CD8-positive, alpha-beta T cell (primary cell): ENCODE measurements at regions of chr6 and their contacts with region 1.

Region 1: DNA sequence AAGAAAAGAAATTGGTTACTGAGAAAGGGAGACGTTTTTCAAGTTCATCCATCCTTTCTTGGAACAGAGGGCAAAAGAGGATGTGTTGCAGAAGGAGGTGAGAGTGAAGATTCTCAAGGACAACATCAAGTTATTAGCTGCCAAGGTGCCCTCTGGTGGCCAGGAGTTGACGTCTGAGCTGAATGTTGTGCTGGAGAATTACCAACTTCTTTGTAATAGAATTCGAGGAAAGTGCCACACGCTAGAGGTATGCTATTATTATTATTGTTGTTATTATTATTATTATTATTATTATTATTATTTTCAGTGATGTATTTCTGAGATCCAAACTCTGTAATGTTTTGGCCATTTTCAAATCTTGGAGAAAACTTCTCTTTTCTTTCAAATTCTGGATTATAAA is 197.0 kb downstream of the UTRN start:
- DNase-seq: peak; percentile 49 to 80 (median 75)
- ATAC-seq: peak; percentile 77
- H3K4me3 ChIP-seq: no peak overlapping the region
- H3K4me3 Mint-ChIP-seq: no peak overlapping the region
- H3K27ac ChIP-seq: no peak overlapping the region
- H3K27ac Mint-ChIP-seq: no peak overlapping the region
- H3K4me1 ChIP-seq: no peaks in the 10 kb centered on the region
- H3K4me1 Mint-ChIP-seq: peaks cover 3% of the 10 kb centered on the region
- H3K27me3 ChIP-seq: no peaks in the 10 kb centered on the region
- H3K27me3 Mint-ChIP-seq: no peaks in the 10 kb centered on the region
- CTCF ChIP-seq: peak; percentile 80

Region 2: DNA sequence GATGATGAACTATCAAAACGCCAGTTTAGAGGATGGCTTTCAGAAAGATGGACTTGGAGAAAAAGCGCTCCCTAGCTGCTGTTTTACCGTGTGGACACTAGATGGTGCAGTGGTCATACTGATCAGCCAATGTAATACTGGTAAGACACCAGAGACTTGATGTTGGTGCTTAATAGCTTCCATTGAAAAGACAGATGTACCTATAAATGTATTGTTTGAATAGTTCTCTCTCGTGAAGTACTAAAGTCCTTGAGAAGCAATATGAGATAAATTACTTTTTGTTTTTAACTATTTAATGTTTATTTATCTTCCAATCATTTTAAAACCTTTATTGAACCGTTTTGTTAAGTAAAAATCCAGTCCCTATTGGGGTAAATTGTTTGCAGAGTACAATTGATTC is 906.7 kb before region 1 on chr6:
- CTCF ChIA-PET with region 1: interaction called, 3 read pairs
- POLR2A ChIA-PET with region 1: no interaction called
- intact Hi-C with region 1: loop called (anchors 2 kb)
- DNase-seq: peak; percentile 12 to 81 (median 46)
- ATAC-seq: peak; percentile 99
- H3K4me3 ChIP-seq: no peak overlapping the region
- H3K4me3 Mint-ChIP-seq: no peak overlapping the region
- H3K27ac ChIP-seq: no peak overlapping the region
- H3K27ac Mint-ChIP-seq: no peak overlapping the region
- H3K4me1 ChIP-seq: no peaks in the 10 kb centered on the region
- H3K4me1 Mint-ChIP-seq: no peaks in the 10 kb centered on the region
- H3K27me3 ChIP-seq: no peaks in the 10 kb centered on the region
- H3K27me3 Mint-ChIP-seq: no peaks in the 10 kb centered on the region
- CTCF ChIP-seq: peak; percentile 93

Region 3: GRCh38 chr6:144149891-144150709 is 332.0 kb before region 1 on chr6 and contains the start of gene STX11:
- CTCF ChIA-PET with region 1: no interaction called
- POLR2A ChIA-PET with region 1: no interaction called
- intact Hi-C with region 1: loop called in 1 of 2 experiments (anchors 2 kb)
- DNase-seq: peak; percentile 27 to 89 (median 67)
- ATAC-seq: peak; percentile 56
- H3K4me3 ChIP-seq: peak within 1 kb of the TSS; percentile 68 to 71
- H3K4me3 Mint-ChIP-seq: peak within 1 kb of the TSS; percentile 94
- H3K27ac ChIP-seq: peak within 1 kb of the TSS; percentile 66 to 90
- H3K27ac Mint-ChIP-seq: peak within 1 kb of the TSS; percentile 95
- H3K4me1 ChIP-seq: peaks cover 5% of the 10 kb centered on the region
- H3K4me1 Mint-ChIP-seq: peaks cover 19% of the 10 kb centered on the region
- H3K27me3 ChIP-seq: no peaks in the 10 kb centered on the region
- H3K27me3 Mint-ChIP-seq: no peaks in the 10 kb centered on the region
- CTCF ChIP-seq: no peak
- total RNA-seq, gene STX11: 17.7 to 18.9 TPM

Region 4: GRCh38 chr6:144334131-144334708 is 147.9 kb before region 1 on chr6:
- CTCF ChIA-PET with region 1: interaction called, 3 read pairs
- POLR2A ChIA-PET with region 1: no interaction called
- intact Hi-C with region 1: loop called in 1 of 2 experiments (anchors 5 kb)
- DNase-seq: peak; percentile 42 to 94 (median 78)
- ATAC-seq: peak; percentile 93
- H3K4me3 ChIP-seq: peak overlapping the region; percentile 51 to 52
- H3K4me3 Mint-ChIP-seq: peak overlapping the region; percentile 86
- H3K27ac ChIP-seq: peak overlapping the region; percentile 65 to 90
- H3K27ac Mint-ChIP-seq: peak overlapping the region; percentile 98
- H3K4me1 ChIP-seq: peaks cover 47% of the 10 kb centered on the region
- H3K4me1 Mint-ChIP-seq: peaks cover 53% of the 10 kb centered on the region
- H3K27me3 ChIP-seq: no peaks in the 10 kb centered on the region
- H3K27me3 Mint-ChIP-seq: no peaks in the 10 kb centered on the region
- CTCF ChIP-seq: no peak

Region 5: DNA sequence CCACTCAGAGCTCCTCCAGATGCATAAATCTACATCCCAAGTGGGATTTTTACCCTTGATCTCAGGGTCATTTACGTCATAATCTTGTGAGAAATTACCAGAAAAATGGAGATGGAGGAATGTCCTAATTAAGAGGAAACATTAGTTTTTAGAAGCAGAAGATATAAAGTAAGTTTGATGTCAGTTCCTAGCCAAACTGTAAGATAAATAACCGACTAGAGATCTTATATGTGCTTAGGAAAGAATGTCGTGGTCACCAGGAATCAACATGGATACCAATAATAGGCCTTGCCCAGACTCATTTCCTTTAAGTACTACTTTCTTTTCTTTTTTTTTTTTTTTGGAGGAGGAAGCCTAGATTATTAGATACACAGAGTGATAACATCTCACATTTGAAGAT is 10.2 kb before region 1 on chr6:
- CTCF ChIA-PET with region 1: interaction called, 17 read pairs
- POLR2A ChIA-PET with region 1: no interaction called
- intact Hi-C with region 1: no loop called
- DNase-seq: no peak
- ATAC-seq: no peak
- H3K4me3 ChIP-seq: no peak overlapping the region
- H3K4me3 Mint-ChIP-seq: no peak overlapping the region
- H3K27ac ChIP-seq: no peak overlapping the region
- H3K27ac Mint-ChIP-seq: peak overlapping the region; percentile 65
- H3K4me1 ChIP-seq: peaks cover 21% of the 10 kb centered on the region
- H3K4me1 Mint-ChIP-seq: peaks cover 23% of the 10 kb centered on the region
- H3K27me3 ChIP-seq: no peaks in the 10 kb centered on the region
- H3K27me3 Mint-ChIP-seq: no peaks in the 10 kb centered on the region
- CTCF ChIP-seq: no peak

Region 6: GRCh38 chr6:144582939-144583613 is 100.9 kb after region 1 on chr6:
- CTCF ChIA-PET with region 1: no interaction called
- POLR2A ChIA-PET with region 1: no interaction called
- intact Hi-C with region 1: no loop called
- DNase-seq: peak in 8 of 9 experiments; percentile 7 to 76 (median 32)
- ATAC-seq: peak; percentile 86
- H3K4me3 ChIP-seq: peak overlapping the region; percentile 31 to 42
- H3K4me3 Mint-ChIP-seq: peak overlapping the region; percentile 86
- H3K27ac ChIP-seq: peak overlapping the region; percentile 14 to 47
- H3K27ac Mint-ChIP-seq: peak overlapping the region; percentile 90
- H3K4me1 ChIP-seq: peaks cover 21% of the 10 kb centered on the region
- H3K4me1 Mint-ChIP-seq: peaks cover 35% of the 10 kb centered on the region
- H3K27me3 ChIP-seq: no peaks in the 10 kb centered on the region
- H3K27me3 Mint-ChIP-seq: no peaks in the 10 kb centered on the region
- CTCF ChIP-seq: no peak

Region 7: GRCh38 chr6:144729502-144729901 is 247.4 kb after region 1 on chr6:
- CTCF ChIA-PET with region 1: no interaction called
- POLR2A ChIA-PET with region 1: no interaction called
- intact Hi-C with region 1: no loop called
- DNase-seq: no peak
- ATAC-seq: no peak
- H3K4me3 ChIP-seq: no peak overlapping the region
- H3K4me3 Mint-ChIP-seq: no peak overlapping the region
- H3K27ac ChIP-seq: peak overlapping the region in 1 of 2 experiments; percentile 14
- H3K27ac Mint-ChIP-seq: no peak overlapping the region
- H3K4me1 ChIP-seq: peaks cover 12% of the 10 kb centered on the region
- H3K4me1 Mint-ChIP-seq: peaks cover 35% of the 10 kb centered on the region
- H3K27me3 ChIP-seq: no peaks in the 10 kb centered on the region
- H3K27me3 Mint-ChIP-seq: no peaks in the 10 kb centered on the region
- CTCF ChIP-seq: no peak